ENCODE measurements at regions of chrX and their contacts with region 1.

Region 1: DNA sequence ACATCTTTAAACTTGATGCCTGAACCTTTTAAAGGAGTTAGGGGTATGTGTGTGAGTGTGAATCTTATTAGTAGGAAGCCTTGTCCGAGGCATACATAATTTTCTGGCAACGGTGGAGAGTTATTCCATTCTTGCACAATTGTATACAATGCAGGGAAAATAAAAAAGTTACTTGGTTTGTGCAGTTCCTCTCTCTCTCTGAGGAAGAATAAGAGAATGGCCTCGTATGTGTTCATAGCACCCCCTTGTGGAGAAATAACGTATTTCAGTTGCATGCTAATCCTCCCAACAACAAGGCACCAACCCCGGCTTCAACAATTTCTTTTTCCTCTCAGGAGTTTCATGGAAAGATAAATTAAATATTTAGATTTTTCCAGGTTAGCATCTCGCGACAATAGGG is 33.7 kb upstream of the FGF13 start:
- DNase-seq: no peak
- ATAC-seq: no peak
- H3K4me3 ChIP-seq: no peak overlapping the region
- H3K27ac ChIP-seq: no peak overlapping the region
- H3K4me1 ChIP-seq: peaks cover 0 to 3% of the 10 kb centered on the region in 2 donors
- H3K27me3 ChIP-seq: no peaks in the 10 kb centered on the region
- CTCF ChIP-seq: peak; percentile 10 to 78 (median 52)
- POLR2A ChIP-seq: no peak

Region 2: GRCh38 chrX:138128027-138128671 is 617.0 kb before region 1 on chrX:
- in situ Hi-C with region 1: loop called in 2 of 4 experiments (anchors 10 kb)
- intact Hi-C with region 1: loop called (anchors 5 kb)
- DNase-seq: no peak
- ATAC-seq: no peak
- H3K4me3 ChIP-seq: no peak overlapping the region
- H3K27ac ChIP-seq: no peak overlapping the region
- H3K4me1 ChIP-seq: no peaks in the 10 kb centered on the region
- H3K27me3 ChIP-seq: no peaks in the 10 kb centered on the region
- CTCF ChIP-seq: peak in 3 of 5 experiments; percentile 12 to 55 (median 36)
- POLR2A ChIP-seq: no peak

Region 3: GRCh38 chrX:138191998-138192397 is 553.2 kb before region 1 on chrX:
- in situ Hi-C with region 1: no loop called
- intact Hi-C with region 1: loop called (anchors 10 kb)
- DNase-seq: no peak
- ATAC-seq: no peak
- H3K4me3 ChIP-seq: no peak overlapping the region
- H3K27ac ChIP-seq: no peak overlapping the region
- H3K4me1 ChIP-seq: no peaks in the 10 kb centered on the region
- H3K27me3 ChIP-seq: no peaks in the 10 kb centered on the region
- CTCF ChIP-seq: peak in 1 of 5 experiments; percentile 20
- POLR2A ChIP-seq: no peak